GM12878 (cell line): ENCODE measurements at regions of chr10 and their contacts with region 1.

Region 1: DNA sequence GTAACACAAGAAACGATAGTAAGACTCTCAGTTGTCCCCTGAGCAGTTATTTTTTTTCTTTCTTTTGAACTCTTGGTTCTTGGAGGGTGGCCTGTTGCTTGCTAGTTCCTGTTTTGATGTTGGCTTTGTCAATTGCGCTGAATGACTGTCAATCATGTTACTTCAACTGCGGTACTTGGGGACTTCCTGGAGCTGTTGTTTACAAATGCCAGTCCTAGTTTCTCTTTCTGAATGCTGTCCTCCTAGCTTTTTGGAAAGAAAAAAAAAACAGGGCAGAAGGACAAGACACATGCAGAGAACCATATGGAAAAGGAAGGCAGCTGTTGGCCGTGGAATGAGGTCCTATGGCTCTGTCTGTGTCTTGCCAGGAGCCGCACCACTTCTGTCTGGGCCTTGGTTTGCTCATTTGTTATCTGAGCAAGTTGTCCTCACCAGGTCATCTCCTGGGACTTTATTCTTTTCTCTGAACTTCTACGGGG is 7.0 kb upstream of the PDCD4 start:
- DNase-seq: peak; percentile 97
- ATAC-seq: peak; percentile 61
- H3K4me3 ChIP-seq: peak overlapping the region; percentile 62; the same call in 1 of the 2 replicates
- H3K27ac ChIP-seq: peak overlapping the region; percentile 99
- H3K4me1 ChIP-seq: peaks cover 93% of the 10 kb centered on the region
- H3K27me3 ChIP-seq: no peaks in the 10 kb centered on the region
- CTCF ChIP-seq: no peak
- EP300 ChIP-seq: peak; percentile 16 to 71; a peak in 1 of 4 replicates
- POLR2A ChIP-seq: no peak
- RAD21 ChIP-seq: 0 out of 2 replicates have a peak, but pooled peaks have one; percentile 5

Region 2: DNA sequence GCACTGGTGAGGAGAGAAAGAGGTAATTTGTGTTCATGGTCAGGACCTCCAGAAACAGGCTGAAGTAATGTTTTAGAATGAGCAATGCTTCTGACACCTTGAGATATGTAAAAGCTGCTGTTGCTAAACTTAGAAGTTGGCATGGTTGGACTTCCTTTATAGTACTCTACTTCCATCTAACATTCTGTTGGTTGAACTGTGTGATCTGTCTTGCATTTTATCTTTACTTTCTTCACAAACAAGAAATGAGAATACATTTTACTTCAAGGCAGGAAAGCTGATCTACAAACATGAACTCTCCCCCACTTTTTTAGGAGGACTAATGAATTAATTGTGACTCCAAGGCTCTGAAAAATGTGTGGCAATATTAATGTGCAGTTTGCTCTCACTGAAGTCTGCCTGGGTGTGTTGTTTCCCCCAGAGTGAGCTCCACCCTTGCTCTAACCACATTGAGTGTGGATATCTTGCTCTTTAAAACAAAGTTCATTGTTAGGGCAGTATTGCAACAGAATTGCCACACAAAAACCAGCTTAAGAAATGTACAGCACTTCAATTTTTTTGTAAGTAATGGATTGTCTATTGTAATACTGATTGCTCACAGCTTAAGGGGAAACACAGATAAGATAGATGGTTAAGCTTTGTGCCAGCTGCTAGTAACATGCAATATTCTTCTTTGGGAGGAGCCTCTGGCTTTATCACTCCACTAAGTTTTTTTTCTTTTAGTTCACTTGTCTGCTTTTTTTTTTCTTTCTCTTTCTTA is 788.0 kb before region 1 on chr10:
- CTCF ChIA-PET with region 1: no interaction called
- POLR2A ChIA-PET with region 1: interaction called, 3 read pairs
- RAD21 ChIA-PET with region 1: no interaction called
- SMC1A ChIA-PET with region 1: no interaction called
- in situ Hi-C with region 1: no loop called
- intact Hi-C with region 1: loop called (anchors 5 kb)
- DNase-seq: peak; percentile 76
- ATAC-seq: peak; percentile 83
- H3K4me3 ChIP-seq: peak overlapping the region; percentile 43
- H3K27ac ChIP-seq: peak overlapping the region; percentile 87
- H3K4me1 ChIP-seq: peaks cover 34% of the 10 kb centered on the region
- H3K27me3 ChIP-seq: no peaks in the 10 kb centered on the region
- CTCF ChIP-seq: no peak
- EP300 ChIP-seq: peak; percentile 26 to 46; a peak in 1 of 4 replicates
- POLR2A ChIP-seq: no peak
- RAD21 ChIP-seq: peak; percentile 11; the same call in 1 of the 2 replicates

Region 3: DNA sequence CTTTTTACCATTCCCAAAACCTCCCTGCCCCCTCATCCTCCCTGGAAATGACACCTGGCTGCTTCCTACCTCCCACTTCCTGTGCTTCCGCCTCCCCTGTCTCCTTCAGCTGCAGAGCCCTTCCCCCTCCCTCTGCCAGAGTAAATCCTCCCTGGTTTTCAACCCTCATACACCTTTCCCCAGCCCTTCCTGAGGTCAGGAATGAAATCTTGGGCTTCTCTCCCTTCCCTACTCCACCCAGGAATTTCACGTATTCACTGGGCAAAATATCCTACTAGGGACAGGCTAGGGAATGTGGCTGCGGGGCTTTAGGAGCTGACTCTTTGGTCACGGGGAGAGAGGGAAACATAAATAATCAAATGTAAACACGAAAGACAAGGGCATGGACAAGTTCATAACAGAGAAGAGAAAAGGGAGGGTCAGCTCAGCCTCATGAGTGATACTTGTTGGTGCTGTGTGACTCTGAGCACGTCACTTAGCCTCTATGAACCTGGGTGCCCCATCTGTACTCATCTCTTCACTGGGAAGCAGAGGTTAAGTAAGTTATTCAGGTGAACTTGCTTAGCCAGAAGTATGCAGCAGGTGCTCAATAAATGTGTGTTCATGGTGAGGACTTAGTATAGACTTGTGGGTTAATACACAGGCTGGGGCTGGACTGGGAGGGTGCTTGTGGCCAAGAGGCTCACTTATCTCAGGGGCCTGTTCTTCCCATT is 377.1 kb before region 1 on chr10:
- CTCF ChIA-PET with region 1: no interaction called
- POLR2A ChIA-PET with region 1: no interaction called
- RAD21 ChIA-PET with region 1: no interaction called
- SMC1A ChIA-PET with region 1: no interaction called
- in situ Hi-C with region 1: no loop called
- intact Hi-C with region 1: no loop called
- DNase-seq: no peak
- ATAC-seq: no peak; the same call in 2 of the 3 replicates
- H3K4me3 ChIP-seq: no peak overlapping the region
- H3K27ac ChIP-seq: no peak overlapping the region
- H3K4me1 ChIP-seq: peaks cover 6% of the 10 kb centered on the region
- H3K27me3 ChIP-seq: peaks cover 0 to 1% of the 10 kb centered on the region in 2 experiments; a peak in 2 of 4 replicates
- CTCF ChIP-seq: no peak
- EP300 ChIP-seq: no peak
- POLR2A ChIP-seq: no peak
- RAD21 ChIP-seq: no peak

Region 4: GRCh38 chr10:110794808-110795207 is 69.9 kb before region 1 on chr10:
- CTCF ChIA-PET with region 1: no interaction called
- POLR2A ChIA-PET with region 1: interaction called, 6 read pairs
- RAD21 ChIA-PET with region 1: interaction called, 6 read pairs
- SMC1A ChIA-PET with region 1: interaction called, 18 read pairs
- in situ Hi-C with region 1: no loop called
- intact Hi-C with region 1: no loop called
- DNase-seq: no peak
- ATAC-seq: no peak
- H3K4me3 ChIP-seq: no peak overlapping the region
- H3K27ac ChIP-seq: no peak overlapping the region
- H3K4me1 ChIP-seq: peaks cover 4% of the 10 kb centered on the region; the same call in 1 of the 2 replicates
- H3K27me3 ChIP-seq: no peaks in the 10 kb centered on the region
- CTCF ChIP-seq: no peak
- EP300 ChIP-seq: no peak
- POLR2A ChIP-seq: no peak
- RAD21 ChIP-seq: no peak

Region 5: GRCh38 chr10:110843031-110843430 is 21.7 kb before region 1 on chr10:
- CTCF ChIA-PET with region 1: interaction called, 68 read pairs
- POLR2A ChIA-PET with region 1: interaction called, 145 read pairs
- RAD21 ChIA-PET with region 1: interaction called, 138 read pairs
- SMC1A ChIA-PET with region 1: interaction called, 188 read pairs
- in situ Hi-C with region 1: no loop called
- intact Hi-C with region 1: loop called (anchors 1 kb)
- DNase-seq: peak; percentile 98
- ATAC-seq: peak; percentile 74
- H3K4me3 ChIP-seq: peak overlapping the region; percentile 68
- H3K27ac ChIP-seq: peak overlapping the region; percentile 97
- H3K4me1 ChIP-seq: peaks cover 53% of the 10 kb centered on the region
- H3K27me3 ChIP-seq: no peaks in the 10 kb centered on the region
- CTCF ChIP-seq: no peak
- EP300 ChIP-seq: peak; percentile 53 to 91; a peak in 3 of 4 replicates
- POLR2A ChIP-seq: no peak; the same call in 1 of the 2 replicates
- RAD21 ChIP-seq: peak; percentile 37; the same call in 1 of the 2 replicates

Region 6: DNA sequence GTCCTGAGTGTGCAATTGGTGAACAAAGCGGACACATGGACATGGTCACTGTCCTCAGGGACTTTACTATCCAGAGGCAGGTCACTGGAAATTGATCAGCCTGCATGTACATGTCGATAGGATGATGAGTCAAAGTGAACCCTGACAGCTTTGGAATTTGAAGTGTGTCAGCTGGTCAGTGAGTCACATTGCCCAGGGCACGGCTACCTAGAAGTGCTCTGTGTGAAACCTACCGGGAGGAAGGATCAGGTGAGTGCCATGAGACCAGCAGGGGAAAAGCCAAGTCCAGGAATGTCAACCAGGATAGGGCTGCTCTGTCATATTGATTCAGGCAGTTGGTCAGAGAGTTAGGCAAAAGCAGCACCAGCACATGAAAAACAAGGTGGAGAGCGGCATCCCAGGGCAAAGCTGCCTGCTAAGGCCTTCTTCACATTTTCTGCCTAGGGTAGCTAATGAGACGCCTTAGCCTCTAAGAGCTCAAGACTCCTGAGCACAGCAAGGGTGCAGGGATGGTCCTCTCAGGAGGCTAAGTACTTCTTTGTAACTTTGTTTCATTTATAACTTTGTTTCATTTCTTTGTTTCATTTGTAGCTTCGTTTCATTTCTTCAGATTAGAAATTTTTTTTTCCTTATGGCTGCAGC is 12.3 kb before region 1 on chr10:
- CTCF ChIA-PET with region 1: interaction called, 68 read pairs
- POLR2A ChIA-PET with region 1: interaction called, 145 read pairs
- RAD21 ChIA-PET with region 1: interaction called, 138 read pairs
- SMC1A ChIA-PET with region 1: interaction called, 188 read pairs
- in situ Hi-C with region 1: no loop called
- intact Hi-C with region 1: no loop called
- DNase-seq: no peak
- ATAC-seq: peak; percentile 28
- H3K4me3 ChIP-seq: no peak overlapping the region
- H3K27ac ChIP-seq: peak overlapping the region; percentile 39
- H3K4me1 ChIP-seq: peaks cover 53% of the 10 kb centered on the region
- H3K27me3 ChIP-seq: no peaks in the 10 kb centered on the region
- CTCF ChIP-seq: no peak
- EP300 ChIP-seq: no peak
- POLR2A ChIP-seq: no peak
- RAD21 ChIP-seq: no peak

Region 7: GRCh38 chr10:110883924-110884323 is 19.2 kb after region 1 on chr10:
- CTCF ChIA-PET with region 1: interaction called, 7 read pairs
- POLR2A ChIA-PET with region 1: interaction called, 5 read pairs
- RAD21 ChIA-PET with region 1: interaction called, 6 read pairs
- SMC1A ChIA-PET with region 1: interaction called, 66 read pairs
- in situ Hi-C with region 1: no loop called
- intact Hi-C with region 1: no loop called
- DNase-seq: no peak
- ATAC-seq: peak; percentile 5; the same call in 2 of the 3 replicates
- H3K4me3 ChIP-seq: no peak overlapping the region; the same call in 1 of the 2 replicates
- H3K27ac ChIP-seq: no peak overlapping the region
- H3K4me1 ChIP-seq: peaks cover 6% of the 10 kb centered on the region
- H3K27me3 ChIP-seq: no peaks in the 10 kb centered on the region
- CTCF ChIP-seq: no peak
- EP300 ChIP-seq: no peak
- POLR2A ChIP-seq: no peak
- RAD21 ChIP-seq: no peak

Region 8: DNA sequence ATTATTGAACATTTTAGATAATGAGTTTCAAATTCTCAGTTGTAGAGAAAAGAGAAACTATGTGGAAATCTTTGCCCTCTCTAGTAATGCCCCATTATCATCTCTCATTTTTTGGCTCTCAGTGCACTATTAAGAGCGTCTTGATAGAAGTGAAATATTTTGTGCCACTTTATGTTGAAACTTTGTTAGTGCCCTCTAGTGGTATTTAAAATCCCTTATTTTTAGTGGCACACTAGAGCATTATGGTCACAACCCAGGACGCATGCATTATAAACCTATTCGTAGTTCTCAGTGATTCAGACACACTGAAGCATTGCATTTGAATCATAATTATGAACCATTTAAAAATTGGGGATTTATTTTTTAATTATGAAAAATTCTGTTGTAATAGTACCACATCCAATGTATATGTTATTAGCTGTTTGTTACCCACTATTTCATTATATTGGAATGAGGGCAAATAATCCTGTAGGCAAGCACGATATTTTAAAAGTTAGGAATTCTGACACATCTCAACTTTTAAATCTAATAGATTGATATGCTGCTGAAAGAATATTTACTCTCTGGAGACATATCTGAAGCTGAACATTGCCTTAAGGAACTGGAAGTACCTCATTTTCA is 29.0 kb after region 1 on chr10:
- CTCF ChIA-PET with region 1: interaction called, 7 read pairs
- POLR2A ChIA-PET with region 1: interaction called, 4 read pairs
- RAD21 ChIA-PET with region 1: interaction called, 7 read pairs
- SMC1A ChIA-PET with region 1: interaction called, 12 read pairs
- in situ Hi-C with region 1: no loop called
- intact Hi-C with region 1: no loop called
- DNase-seq: no peak
- ATAC-seq: peak; percentile 93
- H3K4me3 ChIP-seq: no peak overlapping the region
- H3K27ac ChIP-seq: no peak overlapping the region
- H3K4me1 ChIP-seq: no peaks in the 10 kb centered on the region
- H3K27me3 ChIP-seq: no peaks in the 10 kb centered on the region
- CTCF ChIP-seq: peak; percentile 34 to 52 (median 44); a peak in 4 of 6 replicates
- EP300 ChIP-seq: no peak
- POLR2A ChIP-seq: no peak
- RAD21 ChIP-seq: peak; percentile 66

Region 9: DNA sequence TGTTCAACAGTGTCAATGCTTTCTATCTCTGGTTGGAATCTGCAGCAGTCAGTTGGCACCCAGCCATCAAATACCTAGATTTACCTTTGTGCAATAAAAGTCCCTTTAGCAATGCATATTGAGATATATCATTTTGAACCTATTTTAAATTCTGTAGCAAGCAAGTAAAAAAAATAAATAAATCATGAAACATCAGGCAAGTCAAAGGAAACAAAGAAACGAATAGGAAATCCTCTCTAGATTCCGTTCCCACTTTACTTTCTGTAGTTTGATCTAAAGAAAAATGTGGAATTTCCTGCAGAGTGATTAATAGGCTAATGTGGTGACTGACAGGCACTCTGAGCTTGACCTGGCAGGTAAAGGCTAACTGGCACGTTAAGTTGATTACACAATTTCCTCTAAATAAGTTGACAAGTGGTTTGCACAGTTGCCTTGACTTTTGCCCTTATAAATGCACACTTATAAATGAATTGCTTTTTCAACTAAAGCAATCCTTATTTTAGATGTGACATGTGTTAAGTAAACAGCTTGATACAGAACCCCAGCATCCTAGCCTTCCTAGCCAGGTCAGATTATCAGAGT is 1877.2 kb after region 1 on chr10:
- CTCF ChIA-PET with region 1: no interaction called
- POLR2A ChIA-PET with region 1: no interaction called
- RAD21 ChIA-PET with region 1: no interaction called
- SMC1A ChIA-PET with region 1: no interaction called
- in situ Hi-C with region 1: no loop called
- intact Hi-C with region 1: no loop called
- DNase-seq: no peak
- ATAC-seq: no peak
- H3K4me3 ChIP-seq: no peak overlapping the region
- H3K27ac ChIP-seq: no peak overlapping the region
- H3K4me1 ChIP-seq: no peaks in the 10 kb centered on the region
- H3K27me3 ChIP-seq: no peaks in the 10 kb centered on the region
- CTCF ChIP-seq: no peak
- EP300 ChIP-seq: no peak
- POLR2A ChIP-seq: no peak
- RAD21 ChIP-seq: no peak